MCF 10A (cell line): ENCODE measurements at regions of chr17 and their contacts with region 1.

Region 1: GRCh38 chr17:17959520-17960361 is 12.5 kb downstream of the TOM1L2 start:
- DNase-seq: no peak
- H3K4me3 Mint-ChIP-seq: no peak overlapping the region
- H3K27ac Mint-ChIP-seq: no peak overlapping the region
- H3K4me1 Mint-ChIP-seq: peaks cover 25% of the 10 kb centered on the region
- H3K27me3 Mint-ChIP-seq: no peaks in the 10 kb centered on the region
- CTCF ChIP-seq: no peak

Region 2: DNA sequence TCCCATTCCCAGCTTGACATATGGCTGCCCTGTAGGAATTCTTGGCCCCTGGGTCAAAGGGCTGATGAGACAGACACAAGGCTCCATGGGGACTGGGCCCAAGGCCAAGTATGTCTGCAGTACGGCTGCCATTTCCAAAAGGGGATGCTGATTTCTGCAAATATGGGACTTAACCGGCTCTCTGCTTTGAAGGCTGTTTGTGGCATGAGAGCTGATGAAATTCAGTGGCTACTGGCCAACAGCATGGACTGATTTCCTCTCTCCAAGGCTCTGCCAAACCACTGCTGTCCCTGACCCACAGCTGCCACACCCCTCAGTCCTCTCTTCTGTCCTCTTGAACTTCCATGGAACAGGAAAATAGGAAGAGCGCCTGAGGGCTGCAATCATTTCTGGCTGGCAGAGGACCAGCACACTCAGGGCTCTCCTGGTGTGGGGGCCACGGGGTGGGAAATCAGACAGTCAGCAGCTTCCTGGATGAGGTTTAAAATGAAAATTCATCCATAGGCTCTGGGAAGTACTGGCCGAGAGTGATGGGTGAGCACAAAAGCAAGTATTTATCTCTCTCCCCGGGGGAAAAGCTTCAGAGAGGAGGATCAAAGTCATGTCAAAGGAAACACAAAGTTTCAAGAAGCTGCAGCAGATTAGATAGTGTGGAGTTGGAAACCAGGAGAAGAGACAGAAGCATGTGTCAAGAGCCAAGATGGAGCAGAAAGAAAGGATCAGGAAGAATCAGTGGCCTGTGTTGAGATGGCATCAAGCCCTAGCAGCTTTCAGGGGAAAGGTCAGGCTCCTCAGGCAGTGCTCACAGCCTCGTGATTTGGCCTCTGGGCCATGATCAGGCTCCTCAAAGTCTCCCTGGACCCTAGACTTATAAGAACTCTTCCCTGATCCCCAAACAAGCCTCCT is 58.9 kb before region 1 on chr17:
- CTCF ChIA-PET with region 1: no interaction called
- POLR2A ChIA-PET with region 1: interaction called, 5 read pairs
- intact Hi-C with region 1: loop called (anchors 2 kb)
- DNase-seq: peak; percentile 96
- H3K4me3 Mint-ChIP-seq: peak overlapping the region; percentile 12
- H3K27ac Mint-ChIP-seq: no peak overlapping the region
- H3K4me1 Mint-ChIP-seq: peaks cover 13% of the 10 kb centered on the region
- H3K27me3 Mint-ChIP-seq: no peaks in the 10 kb centered on the region
- CTCF ChIP-seq: no peak

Region 3: GRCh38 chr17:17935321-17936271 is 24.1 kb before region 1 on chr17:
- CTCF ChIA-PET with region 1: no interaction called
- POLR2A ChIA-PET with region 1: interaction called, 3 read pairs
- intact Hi-C with region 1: loop called (anchors 2 kb)
- DNase-seq: peak; percentile 82
- H3K4me3 Mint-ChIP-seq: no peak overlapping the region
- H3K27ac Mint-ChIP-seq: peak overlapping the region; percentile 65
- H3K4me1 Mint-ChIP-seq: peaks cover 47% of the 10 kb centered on the region
- H3K27me3 Mint-ChIP-seq: no peaks in the 10 kb centered on the region
- CTCF ChIP-seq: no peak

Region 4: GRCh38 chr17:17942846-17943245 is 16.9 kb before region 1 on chr17:
- CTCF ChIA-PET with region 1: interaction called, 3 read pairs
- POLR2A ChIA-PET with region 1: interaction called, 18 read pairs
- intact Hi-C with region 1: no loop called
- DNase-seq: peak; percentile 24
- H3K4me3 Mint-ChIP-seq: no peak overlapping the region
- H3K27ac Mint-ChIP-seq: peak overlapping the region; percentile 1
- H3K4me1 Mint-ChIP-seq: peaks cover 44% of the 10 kb centered on the region
- H3K27me3 Mint-ChIP-seq: no peaks in the 10 kb centered on the region
- CTCF ChIP-seq: no peak

Region 5: DNA sequence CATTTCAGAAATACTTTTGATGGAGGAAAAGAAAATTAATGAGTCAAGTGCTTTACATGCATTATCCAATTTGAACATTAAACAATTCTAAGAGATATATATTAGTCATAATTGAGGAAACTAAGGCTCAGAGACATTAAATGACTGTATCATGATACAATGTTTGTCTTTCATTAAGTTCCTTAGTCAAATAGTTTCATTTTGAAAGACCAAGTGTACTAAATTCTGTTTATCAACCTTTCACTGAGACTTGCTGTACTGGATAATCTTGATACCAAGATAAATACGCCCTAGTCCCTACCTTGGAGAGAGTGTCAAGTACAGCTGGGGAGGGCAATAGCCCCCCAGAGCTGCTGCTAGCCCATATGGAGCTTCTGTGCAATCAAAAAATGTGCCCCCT is 11.8 kb before region 1 on chr17:
- CTCF ChIA-PET with region 1: interaction called, 3 read pairs
- POLR2A ChIA-PET with region 1: interaction called, 18 read pairs
- intact Hi-C with region 1: no loop called
- DNase-seq: no peak
- H3K4me3 Mint-ChIP-seq: no peak overlapping the region
- H3K27ac Mint-ChIP-seq: no peak overlapping the region
- H3K4me1 Mint-ChIP-seq: peaks cover 11% of the 10 kb centered on the region
- H3K27me3 Mint-ChIP-seq: no peaks in the 10 kb centered on the region
- CTCF ChIP-seq: no peak

Region 6: GRCh38 chr17:17972126-17972951 is 12.6 kb after region 1 on chr17 and contains the starts of genes DRC3 and TOM1L2:
- CTCF ChIA-PET with region 1: interaction called, 5 read pairs
- POLR2A ChIA-PET with region 1: interaction called, 22 read pairs
- intact Hi-C with region 1: no loop called
- DNase-seq: peak; percentile 100
- H3K4me3 Mint-ChIP-seq: peak within 1 kb of the TSS; percentile 90
- H3K27ac Mint-ChIP-seq: peak within 1 kb of the TSS; percentile 98
- H3K4me1 Mint-ChIP-seq: peaks cover 14% of the 10 kb centered on the region
- H3K27me3 Mint-ChIP-seq: no peaks in the 10 kb centered on the region
- CTCF ChIP-seq: no peak
- total RNA-seq, gene DRC3: 2.3 and 3.1 TPM in 2 replicates
- total RNA-seq, gene TOM1L2: 34.2 and 44.3 TPM in 2 replicates

Region 7: DNA sequence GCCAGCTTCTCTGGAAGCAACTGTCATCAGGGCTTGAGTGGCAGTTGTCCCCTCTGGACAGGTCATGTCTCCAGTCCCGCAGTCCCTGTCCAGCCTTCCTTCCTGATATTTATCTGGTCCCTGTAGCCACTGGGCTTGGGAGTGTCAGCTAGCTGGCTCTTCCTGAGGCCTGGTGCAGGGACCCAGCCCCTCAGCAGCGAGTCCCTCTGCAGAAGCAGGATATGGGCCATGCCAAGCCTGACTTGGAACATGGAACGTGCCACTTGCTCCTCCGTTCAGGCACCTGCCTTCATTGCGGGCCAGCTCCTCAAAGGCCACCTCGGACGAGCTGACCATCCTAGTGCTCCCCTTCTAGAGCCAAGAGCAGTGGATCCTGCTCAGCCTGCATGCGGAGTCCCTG is 39.2 kb after region 1 on chr17:
- CTCF ChIA-PET with region 1: no interaction called
- POLR2A ChIA-PET with region 1: no interaction called
- intact Hi-C with region 1: no loop called
- DNase-seq: no peak
- H3K4me3 Mint-ChIP-seq: no peak overlapping the region
- H3K27ac Mint-ChIP-seq: no peak overlapping the region
- H3K4me1 Mint-ChIP-seq: no peaks in the 10 kb centered on the region
- H3K27me3 Mint-ChIP-seq: no peaks in the 10 kb centered on the region
- CTCF ChIP-seq: no peak